ENCODE measurements at regions of chr13 and their contacts with region 1.

Region 1: DNA sequence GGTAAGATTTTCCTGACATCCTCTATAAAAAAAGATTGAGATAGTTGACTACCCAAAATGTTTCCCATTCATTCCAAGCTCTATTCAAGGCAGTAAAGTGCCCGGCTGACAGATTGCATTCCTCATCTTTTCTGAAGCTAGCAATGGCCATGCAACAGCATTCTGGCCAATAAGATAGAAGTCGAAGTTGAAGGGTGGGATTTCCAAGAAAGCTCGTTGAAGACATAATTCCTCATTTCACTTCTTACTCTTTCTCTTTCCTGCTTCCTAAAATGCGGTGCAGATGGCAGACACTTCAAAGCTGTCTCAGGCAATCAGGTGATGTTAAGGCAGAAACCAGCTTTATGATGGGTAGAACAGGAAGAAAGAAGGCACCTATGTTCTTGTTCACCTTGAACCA is 13.4 kb upstream of the ALOX5AP start:
- DNase-seq: no peak
- ATAC-seq: no peak
- H3K4me3 ChIP-seq: no peak overlapping the region
- H3K27ac ChIP-seq: no peak overlapping the region
- H3K4me1 ChIP-seq: peaks cover 0 to 17% of the 10 kb centered on the region in 2 donors
- H3K27me3 ChIP-seq: no peaks in the 10 kb centered on the region
- CTCF ChIP-seq: no peak
- POLR2A ChIP-seq: no peak

Region 2: DNA sequence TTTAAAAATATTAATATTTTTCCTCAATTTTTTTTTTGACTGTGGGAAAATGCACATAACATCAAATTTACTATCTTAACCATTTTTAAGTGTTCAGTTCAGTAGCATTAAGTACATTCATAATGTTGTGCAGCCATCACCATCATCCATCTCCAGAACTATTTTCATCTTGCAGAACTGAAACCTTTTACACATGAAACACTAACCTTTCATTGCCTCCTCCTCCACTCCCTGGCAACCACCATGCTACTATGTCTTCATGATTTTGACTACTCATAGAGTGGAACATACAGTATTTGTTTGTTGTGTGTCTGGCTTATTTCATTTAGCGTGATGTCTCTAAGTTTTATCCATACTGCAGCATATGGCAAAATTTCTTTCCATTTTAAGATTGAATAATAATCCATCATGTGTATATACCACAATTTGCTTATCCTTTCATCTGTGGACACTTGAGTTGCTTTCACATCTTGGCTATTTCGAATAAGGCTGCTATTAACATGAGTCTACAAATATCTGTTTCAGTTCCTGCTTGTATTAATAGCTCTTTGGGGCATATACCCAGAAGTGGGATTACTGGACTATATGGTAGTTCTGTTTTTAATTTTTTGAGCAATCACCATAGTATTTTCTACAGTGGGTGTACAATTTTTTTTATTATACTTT is 1525.4 kb before region 1 on chr13:
- in situ Hi-C with region 1: no loop called
- intact Hi-C with region 1: no loop called
- DNase-seq: no peak
- ATAC-seq: no peak
- H3K4me3 ChIP-seq: no peak overlapping the region
- H3K27ac ChIP-seq: no peak overlapping the region
- H3K4me1 ChIP-seq: no peaks in the 10 kb centered on the region
- H3K27me3 ChIP-seq: no peaks in the 10 kb centered on the region
- CTCF ChIP-seq: no peak
- POLR2A ChIP-seq: no peak

Region 3: DNA sequence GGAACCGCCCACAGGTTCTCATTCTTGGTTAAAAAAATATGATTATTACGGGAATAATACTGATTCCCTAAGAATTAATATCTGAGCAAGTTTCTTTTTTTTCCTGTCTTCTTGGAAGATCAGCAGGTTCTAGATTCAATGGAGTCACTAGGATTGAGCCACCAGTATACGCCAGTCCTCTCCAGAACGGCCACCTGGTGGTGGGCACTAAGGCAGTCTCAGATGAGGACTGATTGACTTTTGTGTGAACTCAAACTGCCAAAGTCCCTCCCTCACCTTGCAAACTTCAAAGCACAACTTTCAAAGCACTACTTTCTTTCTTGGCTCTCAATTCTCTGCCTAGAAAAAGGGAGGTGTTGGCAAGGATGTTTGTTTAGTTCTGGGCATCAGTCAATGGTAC is 19.9 kb before region 1 on chr13:
- in situ Hi-C with region 1: no loop called
- intact Hi-C with region 1: loop called (anchors 1 kb)
- DNase-seq: no peak
- ATAC-seq: no peak
- H3K4me3 ChIP-seq: no peak overlapping the region
- H3K27ac ChIP-seq: no peak overlapping the region
- H3K4me1 ChIP-seq: peaks cover 0 to 8% of the 10 kb centered on the region in 2 donors
- H3K27me3 ChIP-seq: no peaks in the 10 kb centered on the region
- CTCF ChIP-seq: no peak
- POLR2A ChIP-seq: no peak

Measured in gastrocnemius medialis (tissue), 4 donors.